HEK293 (cell line): ENCODE measurements at regions of chr10 and their contacts with region 1.

Region 1: DNA sequence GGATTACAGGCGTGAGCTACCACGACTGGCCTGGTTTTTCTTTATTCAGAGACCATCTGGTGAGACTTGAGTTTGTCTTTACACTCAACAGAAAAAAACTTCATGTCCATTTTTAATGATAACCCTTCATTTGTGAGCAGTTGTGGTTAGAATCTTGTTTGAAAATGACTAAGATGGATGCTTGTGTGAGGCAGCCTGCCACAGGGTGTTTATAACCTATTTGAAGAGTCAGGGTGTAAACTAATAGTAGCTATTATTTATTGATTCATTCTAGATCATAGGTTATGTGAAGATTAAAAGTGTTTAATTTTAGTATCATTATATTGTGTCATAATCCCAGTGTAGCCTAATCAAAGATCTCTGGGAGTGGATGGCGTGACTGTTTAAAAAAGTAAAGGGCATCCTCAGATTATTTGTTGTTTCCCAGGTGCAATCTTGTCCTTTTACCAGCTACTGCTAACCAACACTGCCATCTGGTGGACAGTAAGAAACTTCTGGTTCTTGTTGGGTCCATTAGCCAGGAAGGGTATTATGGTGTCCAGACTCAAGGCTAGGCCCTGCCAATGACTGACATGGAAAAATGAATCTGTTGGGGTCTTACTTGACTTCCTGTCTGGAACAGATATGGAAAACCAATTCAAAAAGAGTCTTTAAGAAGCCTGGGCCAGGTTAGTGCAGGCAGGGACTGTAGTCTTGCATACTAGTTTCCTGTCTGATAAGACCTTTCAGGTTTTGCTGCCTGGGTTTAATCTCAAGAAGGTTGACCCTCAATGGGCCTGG is 24.9 kb downstream of the NRBF2 start:
- H3K4me3 ChIP-seq: no peak overlapping the region
- H3K27ac ChIP-seq: no peak overlapping the region
- H3K4me1 ChIP-seq: no peaks in the 10 kb centered on the region
- CTCF ChIP-seq: peak; percentile 43; the same call in 1 of the 2 replicates

Region 2: DNA sequence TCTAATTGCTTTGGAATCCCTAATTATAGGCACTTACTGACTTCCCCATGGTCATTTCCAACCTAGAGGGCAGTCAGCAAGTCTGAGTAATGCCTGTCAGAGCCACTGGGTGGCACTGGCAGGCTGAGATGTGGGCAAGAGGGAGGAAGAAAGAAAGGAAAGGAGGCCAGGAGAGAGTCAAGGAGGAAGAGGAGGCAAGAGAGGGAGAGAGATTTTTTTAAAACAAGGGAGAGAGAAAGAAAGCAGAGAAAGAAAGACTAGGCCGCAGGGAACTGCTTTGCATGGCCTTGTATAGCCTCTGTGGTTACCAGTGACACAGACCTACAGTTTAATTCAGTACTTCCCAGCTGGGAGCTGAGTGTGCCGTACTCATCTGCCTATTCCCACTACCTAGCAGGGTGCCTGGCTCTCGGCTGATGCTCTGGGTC is 563.9 kb before region 1 on chr10:
- CTCF ChIA-PET with region 1: interaction called, 24 read pairs
- POLR2A ChIA-PET with region 1: no interaction called
- H3K4me3 ChIP-seq: no peak overlapping the region
- H3K27ac ChIP-seq: no peak overlapping the region
- H3K4me1 ChIP-seq: no peaks in the 10 kb centered on the region
- CTCF ChIP-seq: peak; percentile 83

Region 3: GRCh38 chr10:62610649-62611229 is 547.3 kb before region 1 on chr10:
- CTCF ChIA-PET with region 1: interaction called, 12 read pairs
- POLR2A ChIA-PET with region 1: interaction called, 3 read pairs
- H3K4me3 ChIP-seq: no peak overlapping the region
- H3K27ac ChIP-seq: no peak overlapping the region
- H3K4me1 ChIP-seq: no peaks in the 10 kb centered on the region
- CTCF ChIP-seq: no peak

Region 4: GRCh38 chr10:62946278-62946677 is 211.8 kb before region 1 on chr10:
- CTCF ChIA-PET with region 1: no interaction called
- POLR2A ChIA-PET with region 1: no interaction called
- H3K4me3 ChIP-seq: no peak overlapping the region
- H3K27ac ChIP-seq: no peak overlapping the region
- H3K4me1 ChIP-seq: no peaks in the 10 kb centered on the region
- CTCF ChIP-seq: no peak

Region 5: DNA sequence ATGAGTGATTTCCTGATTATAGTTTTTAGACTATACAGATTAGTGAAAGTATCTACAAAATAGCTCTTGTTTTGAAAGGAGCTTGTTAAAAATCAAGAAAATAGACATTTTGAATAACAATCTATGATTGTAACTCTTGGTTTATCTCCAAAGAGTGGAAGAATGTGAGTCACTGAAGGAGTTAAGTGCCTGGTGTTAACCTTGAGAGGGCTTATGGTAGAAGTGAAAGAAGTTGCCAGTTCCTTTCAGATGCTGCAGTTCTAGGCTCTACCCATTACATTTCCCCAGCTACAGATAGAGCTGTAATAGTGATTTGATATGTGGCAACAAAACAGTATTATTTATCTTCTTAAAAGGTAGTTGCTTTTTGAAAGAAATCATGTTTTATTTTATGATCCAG is 12.3 kb before region 1 on chr10:
- CTCF ChIA-PET with region 1: interaction called, 13 read pairs
- POLR2A ChIA-PET with region 1: no interaction called
- H3K4me3 ChIP-seq: no peak overlapping the region
- H3K27ac ChIP-seq: no peak overlapping the region
- H3K4me1 ChIP-seq: no peaks in the 10 kb centered on the region
- CTCF ChIP-seq: no peak